ENCODE measurements at regions of chr22 and their contacts with region 1.

Region 1: DNA sequence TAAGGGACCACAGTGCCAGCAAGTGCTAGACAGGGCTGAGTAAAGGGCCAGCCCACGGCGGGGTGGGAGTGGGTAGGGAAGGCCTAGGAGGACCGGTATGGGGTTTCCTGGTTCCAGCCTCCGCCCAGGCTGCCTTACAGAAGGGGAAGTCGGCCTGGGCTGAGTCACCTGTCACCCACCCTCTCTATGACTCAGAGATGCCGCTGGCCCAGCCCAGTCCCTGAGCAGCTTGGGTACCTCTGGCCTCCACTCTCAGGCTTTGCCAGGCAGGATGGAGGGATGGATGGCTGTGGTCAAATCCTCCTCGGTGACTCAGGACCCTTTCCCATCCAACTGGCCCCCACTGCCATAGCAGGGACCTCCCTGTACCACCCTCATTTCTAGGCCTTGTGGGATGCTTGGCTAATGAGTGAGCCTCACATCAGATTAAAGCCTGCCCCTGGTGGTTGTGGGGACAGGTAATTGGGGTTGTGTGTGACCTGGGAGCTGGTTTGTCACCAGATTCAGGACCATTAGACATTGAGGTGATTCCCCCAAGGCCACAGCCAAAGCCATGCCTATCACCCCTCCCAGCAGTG is 13.9 kb downstream of the SLC35E4 start:
- DNase-seq: peak; percentile 65
- H3K4me3 Mint-ChIP-seq: no peak overlapping the region
- H3K27ac Mint-ChIP-seq: peak overlapping the region; percentile 83
- H3K4me1 Mint-ChIP-seq: peaks cover 39% of the 10 kb centered on the region
- H3K27me3 Mint-ChIP-seq: no peaks in the 10 kb centered on the region

Region 2: DNA sequence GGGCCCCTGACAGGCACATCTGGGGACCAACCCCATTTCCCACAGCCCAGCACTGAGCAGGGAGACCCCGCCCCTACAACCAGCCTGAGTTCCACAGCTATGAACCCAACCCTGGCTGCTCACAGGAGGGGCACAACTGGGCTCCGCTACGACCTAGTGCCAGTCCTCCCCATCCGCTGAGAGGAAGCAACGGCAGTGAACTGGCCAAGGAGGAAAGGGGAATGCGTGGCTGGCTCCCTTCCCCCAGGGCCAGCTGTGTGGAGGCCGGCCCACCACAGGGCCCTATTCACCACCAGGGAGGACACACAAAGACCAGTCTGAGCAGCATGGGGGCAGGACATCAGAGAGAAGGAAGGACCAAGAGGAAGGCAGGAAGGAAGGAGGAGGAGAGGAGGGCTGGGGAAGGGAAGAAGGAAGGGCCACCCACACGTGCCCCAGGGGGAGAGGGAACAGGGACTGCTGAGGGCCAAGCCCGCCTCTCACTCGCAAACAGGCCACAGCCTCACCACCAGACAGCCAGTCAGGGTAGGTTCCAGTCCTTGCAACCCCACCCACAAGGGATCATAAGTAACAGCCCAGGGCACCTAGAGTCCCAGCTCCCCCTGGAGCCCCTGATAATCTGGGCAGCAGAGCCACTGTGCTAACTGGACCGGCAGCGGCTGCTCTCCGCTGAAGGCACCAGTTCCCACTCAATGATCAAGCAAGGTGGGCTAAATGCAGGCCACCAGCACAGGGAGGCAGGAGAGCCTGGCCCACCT is 66.6 kb before region 1 on chr22:
- intact Hi-C with region 1: no loop called
- DNase-seq: no peak
- H3K4me3 Mint-ChIP-seq: no peak overlapping the region
- H3K27ac Mint-ChIP-seq: no peak overlapping the region
- H3K4me1 Mint-ChIP-seq: no peaks in the 10 kb centered on the region
- H3K27me3 Mint-ChIP-seq: no peaks in the 10 kb centered on the region

Region 3: DNA sequence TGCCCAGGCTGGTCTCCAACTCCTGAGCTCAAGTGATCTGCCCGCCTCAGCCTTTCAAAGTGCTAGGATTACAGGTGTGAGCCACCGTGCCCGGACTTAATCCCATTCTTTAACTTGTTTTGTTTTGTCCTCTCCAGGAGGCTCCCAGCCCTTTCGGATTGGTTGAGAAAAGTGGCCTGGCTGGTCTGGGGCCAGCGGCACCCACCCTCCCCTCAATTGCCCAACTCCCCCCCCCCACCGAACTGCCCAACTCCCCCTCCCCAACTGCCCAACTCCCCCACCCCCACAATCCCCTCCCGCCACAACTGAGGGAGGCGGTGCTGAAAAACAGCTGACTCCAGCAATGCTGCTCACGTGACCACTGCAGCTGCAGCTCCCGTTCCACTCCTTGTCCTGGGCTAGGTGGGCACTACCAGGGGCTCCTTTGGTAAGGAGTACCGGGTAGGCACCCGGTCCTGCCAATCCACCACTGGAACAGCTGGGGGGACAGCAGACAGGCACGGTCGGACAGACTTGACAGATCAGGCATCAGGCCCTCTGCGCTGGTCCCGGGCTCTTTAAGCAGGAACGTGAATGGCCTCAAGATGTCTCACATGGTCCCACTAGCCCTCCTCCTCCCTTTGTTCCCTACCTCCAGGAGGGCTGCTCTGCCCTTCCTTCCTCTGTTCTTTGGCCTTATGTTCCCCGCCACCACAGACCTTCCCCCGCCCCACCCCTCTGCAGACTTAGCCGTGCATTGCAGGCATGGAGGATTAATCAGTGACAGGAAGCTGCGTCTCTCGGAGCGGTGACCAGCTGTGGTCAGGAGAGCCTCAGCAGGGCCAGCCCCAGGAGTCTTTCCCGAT is 42.8 kb before region 1 on chr22 and contains the start of gene TCN2:
- intact Hi-C with region 1: loop called (anchors 5 kb)
- DNase-seq: peak; percentile 12
- H3K4me3 Mint-ChIP-seq: peak within 1 kb of the TSS; percentile 81
- H3K27ac Mint-ChIP-seq: peak within 1 kb of the TSS; percentile 80
- H3K4me1 Mint-ChIP-seq: peaks cover 40% of the 10 kb centered on the region
- H3K27me3 Mint-ChIP-seq: peaks cover 3% of the 10 kb centered on the region
- total RNA-seq, gene TCN2: 0.51 and 0.68 TPM in 2 replicates

Region 4: GRCh38 chr22:30667494-30668385 is 18.2 kb after region 1 on chr22 and contains the start of gene DUSP18:
- intact Hi-C with region 1: loop called (anchors 1 kb)
- DNase-seq: peak; percentile 91
- H3K4me3 Mint-ChIP-seq: peak within 1 kb of the TSS; percentile 87
- H3K27ac Mint-ChIP-seq: peak within 1 kb of the TSS; percentile 72
- H3K4me1 Mint-ChIP-seq: peaks cover 16% of the 10 kb centered on the region
- H3K27me3 Mint-ChIP-seq: peaks cover 7% of the 10 kb centered on the region
- total RNA-seq, gene DUSP18: 10.5 and 11.2 TPM in 2 replicates